Mucosa of descending colon (tissue), 3 donors: ENCODE measurements at regions of chr13 and their contacts with region 1.

Region 1: GRCh38 chr13:99176309-99177276 is 24.1 kb upstream of the UBAC2 start:
- DNase-seq: peak; percentile 73 to 91 (median 78)
- ATAC-seq: peak; percentile 98
- H3K4me3 ChIP-seq: no peak overlapping the region
- H3K4me1 ChIP-seq: no peaks in the 10 kb centered on the region
- CTCF ChIP-seq: peak; percentile 81

Region 2: GRCh38 chr13:98869408-98870090 is 307.0 kb before region 1 on chr13:
- intact Hi-C with region 1: no loop called
- DNase-seq: no peak
- ATAC-seq: no peak
- H3K4me3 ChIP-seq: no peak overlapping the region
- H3K4me1 ChIP-seq: no peaks in the 10 kb centered on the region
- CTCF ChIP-seq: no peak

Region 3: GRCh38 chr13:99250982-99251825 is 74.6 kb after region 1 on chr13:
- intact Hi-C with region 1: no loop called
- DNase-seq: no peak
- ATAC-seq: no peak
- H3K4me3 ChIP-seq: no peak overlapping the region
- H3K4me1 ChIP-seq: no peaks in the 10 kb centered on the region
- CTCF ChIP-seq: no peak

Region 4: GRCh38 chr13:99269627-99270241 is 93.1 kb after region 1 on chr13:
- intact Hi-C with region 1: loop called (anchors 2 to 5 kb)
- DNase-seq: peak in 1 of 3 donors; percentile 27
- ATAC-seq: peak; percentile 77
- H3K4me3 ChIP-seq: no peak overlapping the region
- H3K4me1 ChIP-seq: no peaks in the 10 kb centered on the region
- CTCF ChIP-seq: no peak